ENCODE measurements at regions of chr2 and their contacts with region 1.

Region 1: DNA sequence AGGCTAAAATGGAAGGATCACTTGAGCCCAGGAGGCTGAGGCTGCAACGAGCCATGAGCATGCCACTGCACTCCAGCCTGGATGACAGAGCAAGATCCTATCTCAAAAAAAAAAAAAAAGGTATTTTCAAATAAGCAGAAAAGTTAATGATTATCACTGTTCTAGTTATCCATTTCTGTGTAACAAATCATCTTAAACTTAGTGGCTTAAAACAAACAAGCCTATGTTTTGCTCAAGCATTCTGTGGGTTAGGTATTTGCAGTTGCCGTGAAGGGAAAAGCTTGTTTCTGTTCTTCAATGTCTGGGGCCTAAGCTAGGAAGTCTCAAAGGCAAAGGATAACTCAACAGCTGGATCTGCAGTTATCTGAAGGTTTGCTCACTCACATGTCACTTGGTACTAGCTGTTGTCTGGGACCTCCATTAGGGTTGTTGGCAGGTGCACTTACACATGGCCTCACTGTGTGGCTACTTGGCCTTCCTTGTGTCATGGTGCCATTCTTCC is 14.1 kb downstream of the MFF start:
- DNase-seq: no peak
- H3K4me3 ChIP-seq: no peak overlapping the region
- H3K27ac ChIP-seq: no peak overlapping the region
- H3K4me1 ChIP-seq: no peaks in the 10 kb centered on the region
- H3K27me3 ChIP-seq: no peaks in the 10 kb centered on the region
- CTCF ChIP-seq: no peak

Region 2: GRCh38 chr2:227578651-227579050 is 239.5 kb after region 1 on chr2:
- CTCF ChIA-PET with region 1: interaction called, 12 read pairs
- POLR2A ChIA-PET with region 1: no interaction called
- intact Hi-C with region 1: no loop called
- DNase-seq: no peak
- H3K4me3 ChIP-seq: no peak overlapping the region
- H3K27ac ChIP-seq: no peak overlapping the region
- H3K4me1 ChIP-seq: no peaks in the 10 kb centered on the region
- H3K27me3 ChIP-seq: no peaks in the 10 kb centered on the region
- CTCF ChIP-seq: no peak

Measured in PC-9 (cell line).